ENCODE measurements at regions of chr20 and their contacts with region 1.

Region 1: DNA sequence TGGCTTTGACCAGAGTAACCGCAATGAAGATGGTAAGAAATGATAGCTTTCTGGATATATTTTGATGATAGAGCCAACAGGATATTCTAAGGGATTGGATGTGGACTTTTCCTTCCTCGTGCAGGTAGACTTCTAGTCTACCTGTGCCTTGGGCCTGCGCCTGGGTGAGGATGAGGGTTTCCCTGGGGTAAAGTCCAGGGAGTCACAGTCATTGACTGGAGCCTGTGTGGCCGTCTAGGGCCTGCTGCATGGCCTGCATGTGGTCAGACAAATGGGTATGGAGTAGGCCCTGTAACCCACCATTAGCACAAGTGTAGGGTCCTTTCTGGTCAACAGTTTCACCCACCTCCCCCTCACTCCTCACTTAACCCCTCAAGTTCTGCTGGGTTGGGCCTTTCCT is 12.7 kb upstream of the CHMP4B start:
- H3K4me3 Mint-ChIP-seq: no peak overlapping the region
- H3K27ac Mint-ChIP-seq: no peak overlapping the region
- H3K4me1 Mint-ChIP-seq: peaks cover 6% of the 10 kb centered on the region
- H3K27me3 Mint-ChIP-seq: no peaks in the 10 kb centered on the region

Region 2: DNA sequence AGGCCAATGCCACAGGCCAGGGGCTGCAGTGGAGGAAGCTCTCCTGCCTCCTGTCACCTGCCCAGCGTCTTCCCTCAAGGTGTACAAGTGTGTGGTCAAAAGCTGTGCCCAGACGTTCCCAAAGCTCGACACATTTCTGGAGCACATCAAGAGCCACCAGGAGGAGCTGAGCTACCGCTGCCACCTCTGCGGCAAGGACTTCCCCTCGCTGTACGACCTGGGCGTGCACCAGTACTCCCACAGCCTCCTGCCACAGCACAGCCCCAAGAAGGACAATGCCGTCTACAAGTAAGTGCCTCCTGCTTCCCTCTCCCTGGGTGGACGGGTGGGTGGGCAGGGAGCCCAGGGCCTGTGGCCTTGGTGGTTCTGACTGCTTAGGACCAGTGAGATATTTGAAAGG is 28.4 kb before region 1 on chr20:
- intact Hi-C with region 1: no loop called
- H3K4me3 Mint-ChIP-seq: no peak overlapping the region
- H3K27ac Mint-ChIP-seq: no peak overlapping the region
- H3K4me1 Mint-ChIP-seq: peaks cover 14% of the 10 kb centered on the region
- H3K27me3 Mint-ChIP-seq: no peaks in the 10 kb centered on the region

Region 3: GRCh38 chr20:33817411-33817810 is 19.0 kb after region 1 on chr20:
- intact Hi-C with region 1: loop called (anchors 1 kb)
- H3K4me3 Mint-ChIP-seq: no peak overlapping the region
- H3K27ac Mint-ChIP-seq: no peak overlapping the region
- H3K4me1 Mint-ChIP-seq: peaks cover 75% of the 10 kb centered on the region
- H3K27me3 Mint-ChIP-seq: no peaks in the 10 kb centered on the region

Region 4: DNA sequence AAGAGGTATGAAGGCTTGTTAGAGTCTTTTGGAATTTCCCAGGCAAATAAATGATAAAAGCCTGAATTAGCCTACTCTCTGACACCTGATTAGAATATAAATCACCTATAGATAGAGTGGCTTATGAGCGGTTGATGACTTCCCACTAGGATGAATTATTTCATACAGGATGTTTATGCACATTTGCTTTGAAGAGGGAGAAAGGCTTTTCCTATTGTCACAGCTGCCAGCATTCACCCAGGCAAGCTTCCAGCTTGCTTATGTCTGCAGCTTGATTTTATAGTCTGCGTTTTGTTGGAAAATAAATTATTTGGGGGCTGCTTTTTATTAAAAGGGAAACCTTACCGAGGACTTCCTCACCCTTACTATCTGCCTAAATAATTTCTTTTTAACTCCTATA is 364.9 kb after region 1 on chr20:
- intact Hi-C with region 1: no loop called
- H3K4me3 Mint-ChIP-seq: no peak overlapping the region
- H3K27ac Mint-ChIP-seq: no peak overlapping the region
- H3K4me1 Mint-ChIP-seq: peaks cover 13% of the 10 kb centered on the region
- H3K27me3 Mint-ChIP-seq: no peaks in the 10 kb centered on the region

Measured in dendritic cell treated with granulocyte-macrophage colony-stimulating factor and Interleukin-4, amounts not matched to agents 40 ng/mL and 50 ng/mL, for 4 days (primary cell).